ENCODE measurements at regions of chr10 and their contacts with region 1.

Region 1: GRCh38 chr10:96229568-96230030 is 41.8 kb downstream of the BLNK start:
- DNase-seq: peak; percentile 59 to 80 (median 68)
- ATAC-seq: peak; percentile 97
- H3K4me3 ChIP-seq: no peak overlapping the region
- H3K4me3 Mint-ChIP-seq: peak overlapping the region in 3 of 10 donors; percentile 12 to 56 (median 39)
- H3K27ac ChIP-seq: no peak overlapping the region
- H3K27ac Mint-ChIP-seq: peak overlapping the region in 8 of 9 donors; percentile 9 to 87 (median 58)
- H3K4me1 ChIP-seq: no peaks in the 10 kb centered on the region
- H3K4me1 Mint-ChIP-seq: peaks cover 0 to 5% (median 0%) of the 10 kb centered on the region in 7 donors
- H3K27me3 ChIP-seq: no peaks in the 10 kb centered on the region
- H3K27me3 Mint-ChIP-seq: peaks cover 0 to 2% (median 0%) of the 10 kb centered on the region in 5 donors

Region 2: DNA sequence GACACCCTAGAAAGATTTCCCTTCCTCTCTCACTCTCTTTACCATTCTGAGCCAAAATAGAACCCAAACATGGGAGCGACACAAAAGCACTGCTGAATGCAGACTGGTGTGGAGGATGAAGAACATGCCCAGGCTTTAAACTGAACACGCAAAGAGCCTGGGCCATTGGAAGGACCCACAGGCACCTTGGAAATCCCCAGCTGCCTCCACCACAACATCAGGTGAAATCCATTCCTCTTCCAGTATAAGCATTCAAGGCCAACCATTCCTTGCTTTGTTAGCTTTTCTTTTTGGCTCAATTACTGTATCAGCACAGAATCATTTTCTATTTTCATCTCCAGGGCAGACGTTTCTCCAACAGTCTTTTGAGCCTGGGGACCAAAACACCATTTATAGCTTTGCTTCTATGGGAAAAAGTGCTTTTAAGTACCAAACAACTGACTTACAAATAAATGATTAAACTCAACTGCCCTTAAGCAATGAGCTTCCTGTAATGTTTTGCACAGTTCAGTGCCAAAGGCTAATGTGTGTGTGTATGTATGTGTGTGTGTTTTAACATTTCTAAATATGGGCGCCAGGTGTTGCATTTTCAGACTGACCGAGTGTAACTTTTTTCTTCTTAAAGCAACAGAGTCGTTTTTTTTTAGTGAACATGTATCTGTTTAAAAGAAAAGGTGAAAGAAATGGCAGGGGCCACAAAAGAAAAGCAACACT is 58.0 kb after region 1 on chr10:
- CTCF ChIA-PET with region 1: interaction called, 119 read pairs
- POLR2A ChIA-PET with region 1: interaction called, 3 read pairs
- intact Hi-C with region 1: no loop called
- DNase-seq: no peak
- ATAC-seq: no peak
- H3K4me3 ChIP-seq: no peak overlapping the region
- H3K4me3 Mint-ChIP-seq: peak overlapping the region in 9 of 10 donors; percentile 51 to 93 (median 65)
- H3K27ac ChIP-seq: no peak overlapping the region
- H3K27ac Mint-ChIP-seq: peak overlapping the region in 7 of 9 donors; percentile 3 to 87 (median 43)
- H3K4me1 ChIP-seq: peaks cover 0 to 12% of the 10 kb centered on the region in 2 donors
- H3K4me1 Mint-ChIP-seq: peaks cover 11 to 24% (median 16%) of the 10 kb centered on the region in 7 donors
- H3K27me3 ChIP-seq: no peaks in the 10 kb centered on the region
- H3K27me3 Mint-ChIP-seq: peaks cover 0 to 3% (median 0%) of the 10 kb centered on the region in 5 donors

Region 3: DNA sequence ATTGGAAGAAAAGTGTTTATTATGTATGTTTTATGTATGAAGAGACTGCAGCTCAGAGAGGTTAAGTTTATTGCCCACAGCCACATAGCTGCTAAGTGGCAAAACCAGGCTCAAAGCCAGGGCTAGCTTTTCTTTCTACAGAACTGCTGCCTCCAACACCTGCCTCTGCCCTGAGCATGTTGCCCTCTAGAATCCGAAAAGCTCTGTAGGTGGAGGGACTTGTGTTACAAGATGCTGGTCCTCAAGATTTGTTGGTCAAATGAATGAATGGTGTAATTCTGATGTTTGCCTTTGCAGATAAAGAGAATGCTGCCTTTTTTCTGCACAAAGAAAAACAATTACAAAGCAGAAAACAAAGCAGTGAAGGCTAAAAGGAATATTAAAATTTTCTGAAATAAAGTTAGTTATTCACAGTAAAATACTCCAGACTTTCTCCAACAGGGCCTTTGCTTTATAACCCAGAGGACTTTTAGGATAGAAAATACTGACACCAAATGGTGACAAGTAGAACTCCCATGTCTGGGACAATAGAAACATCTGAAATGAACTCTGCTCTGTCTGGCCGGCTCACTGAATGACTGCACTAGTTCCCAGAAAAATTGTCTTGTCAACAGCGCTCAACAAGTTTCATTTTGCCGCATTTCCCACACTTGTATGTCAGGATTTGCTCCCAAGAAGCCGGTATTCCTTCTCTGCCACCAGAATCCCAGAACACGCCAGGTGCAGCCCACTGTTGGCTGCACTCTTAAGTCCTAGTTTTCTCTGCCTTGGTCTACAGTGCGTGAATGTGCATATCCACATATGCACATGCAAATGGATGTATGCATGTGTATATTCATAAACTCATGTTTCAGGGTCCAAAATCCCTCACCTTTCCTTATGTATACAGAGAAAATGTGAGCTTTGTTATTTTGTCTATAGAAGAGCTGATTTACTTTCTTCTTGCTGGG is 63.6 kb after region 1 on chr10:
- CTCF ChIA-PET with region 1: interaction called, 119 read pairs
- POLR2A ChIA-PET with region 1: no interaction called
- intact Hi-C with region 1: loop called (anchors 1 kb)
- DNase-seq: peak in 6 of 9 donors; percentile 11 to 54 (median 44)
- ATAC-seq: peak; percentile 70
- H3K4me3 ChIP-seq: no peak overlapping the region
- H3K4me3 Mint-ChIP-seq: peak overlapping the region in 1 of 10 donors; percentile 2
- H3K27ac ChIP-seq: no peak overlapping the region
- H3K27ac Mint-ChIP-seq: peak overlapping the region in 5 of 9 donors; percentile 9 to 89 (median 42)
- H3K4me1 ChIP-seq: peaks cover 0 to 25% of the 10 kb centered on the region in 2 donors
- H3K4me1 Mint-ChIP-seq: peaks cover 8 to 54% (median 43%) of the 10 kb centered on the region in 7 donors
- H3K27me3 ChIP-seq: no peaks in the 10 kb centered on the region
- H3K27me3 Mint-ChIP-seq: peaks cover 0 to 3% (median 0%) of the 10 kb centered on the region in 5 donors

Region 4: GRCh38 chr10:96317067-96317833 is 87.7 kb after region 1 on chr10:
- CTCF ChIA-PET with region 1: interaction called, 16 read pairs
- POLR2A ChIA-PET with region 1: no interaction called
- intact Hi-C with region 1: loop called in 1 of 2 experiments (anchors 1 kb)
- DNase-seq: peak in 1 of 9 donors; percentile 25
- ATAC-seq: no peak
- H3K4me3 ChIP-seq: no peak overlapping the region
- H3K4me3 Mint-ChIP-seq: no peak overlapping the region
- H3K27ac ChIP-seq: no peak overlapping the region
- H3K27ac Mint-ChIP-seq: peak overlapping the region in 1 of 9 donors; percentile 48
- H3K4me1 ChIP-seq: no peaks in the 10 kb centered on the region
- H3K4me1 Mint-ChIP-seq: peaks cover 0 to 17% (median 7%) of the 10 kb centered on the region in 7 donors
- H3K27me3 ChIP-seq: no peaks in the 10 kb centered on the region
- H3K27me3 Mint-ChIP-seq: peaks cover 0 to 18% (median 14%) of the 10 kb centered on the region in 5 donors

Region 5: GRCh38 chr10:96339957-96340904 is 110.6 kb after region 1 on chr10:
- CTCF ChIA-PET with region 1: interaction called, 27 read pairs
- POLR2A ChIA-PET with region 1: no interaction called
- intact Hi-C with region 1: loop called (anchors 1 kb)
- DNase-seq: peak in 8 of 9 donors; percentile 32 to 73 (median 66)
- ATAC-seq: peak; percentile 88
- H3K4me3 ChIP-seq: no peak overlapping the region
- H3K4me3 Mint-ChIP-seq: peak overlapping the region in 1 of 10 donors; percentile 20
- H3K27ac ChIP-seq: no peak overlapping the region
- H3K27ac Mint-ChIP-seq: peak overlapping the region in 2 of 9 donors; percentile 8 to 53
- H3K4me1 ChIP-seq: no peaks in the 10 kb centered on the region
- H3K4me1 Mint-ChIP-seq: peaks cover 0 to 11% (median 2%) of the 10 kb centered on the region in 7 donors
- H3K27me3 ChIP-seq: no peaks in the 10 kb centered on the region
- H3K27me3 Mint-ChIP-seq: peaks cover 0 to 10% (median 0%) of the 10 kb centered on the region in 5 donors

Region 6: DNA sequence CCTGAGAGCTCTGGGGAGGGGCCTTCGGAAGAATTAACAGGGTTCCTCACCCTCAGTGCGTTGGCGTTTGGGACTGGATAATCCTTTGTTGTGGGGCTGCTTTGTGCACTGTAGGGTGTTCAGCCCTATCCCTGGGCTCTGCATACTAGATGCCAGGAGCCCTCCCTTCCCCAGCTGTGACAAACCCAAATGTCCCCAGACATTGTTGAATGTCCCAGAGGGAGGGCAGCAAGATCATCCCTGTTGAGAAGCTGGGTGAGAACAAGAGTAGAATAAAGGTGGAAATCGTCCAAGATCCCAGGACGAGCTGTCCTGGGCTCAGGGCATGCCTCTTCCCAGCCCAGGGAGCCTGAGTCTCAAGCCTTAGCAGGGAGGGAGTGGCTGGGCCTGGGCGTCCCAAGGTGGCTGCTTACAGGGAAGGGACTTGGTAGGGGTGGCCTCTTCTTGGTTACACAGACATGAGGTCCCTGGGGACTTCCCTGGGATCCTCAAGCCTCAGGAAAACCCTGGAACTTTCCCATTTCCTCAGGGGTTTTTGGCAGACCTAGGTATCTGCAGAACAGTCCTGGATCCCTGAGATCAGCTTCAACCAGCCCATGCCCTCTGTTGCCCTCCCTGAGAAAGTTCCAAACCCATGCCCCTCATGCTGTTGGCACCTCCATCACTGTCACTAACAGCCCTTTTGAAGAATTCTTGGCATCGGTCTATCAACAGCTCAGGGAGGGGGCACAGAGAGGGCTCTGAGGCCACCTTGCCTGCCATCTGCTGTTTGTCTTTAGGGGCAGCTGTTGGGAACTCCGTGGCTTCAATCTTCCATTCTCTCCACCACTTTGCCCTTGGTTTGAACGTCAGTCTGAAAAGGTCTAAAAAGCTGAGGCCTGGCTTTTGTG is 1673.8 kb after region 1 on chr10:
- CTCF ChIA-PET with region 1: no interaction called
- POLR2A ChIA-PET with region 1: no interaction called
- intact Hi-C with region 1: no loop called
- DNase-seq: no peak
- ATAC-seq: no peak
- H3K4me3 ChIP-seq: no peak overlapping the region
- H3K4me3 Mint-ChIP-seq: no peak overlapping the region
- H3K27ac ChIP-seq: no peak overlapping the region
- H3K27ac Mint-ChIP-seq: no peak overlapping the region
- H3K4me1 ChIP-seq: no peaks in the 10 kb centered on the region
- H3K4me1 Mint-ChIP-seq: no peaks in the 10 kb centered on the region
- H3K27me3 ChIP-seq: no peaks in the 10 kb centered on the region
- H3K27me3 Mint-ChIP-seq: peaks cover 7 to 30% (median 15%) of the 10 kb centered on the region in 5 donors